ENCODE measurements at regions of chr5 and their contacts with region 1.

Region 1: GRCh38 chr5:61598126-61598525 is 266.1 kb downstream of the ZSWIM6 start:
- DNase-seq: no peak
- CTCF ChIP-seq: no peak

Region 2: DNA sequence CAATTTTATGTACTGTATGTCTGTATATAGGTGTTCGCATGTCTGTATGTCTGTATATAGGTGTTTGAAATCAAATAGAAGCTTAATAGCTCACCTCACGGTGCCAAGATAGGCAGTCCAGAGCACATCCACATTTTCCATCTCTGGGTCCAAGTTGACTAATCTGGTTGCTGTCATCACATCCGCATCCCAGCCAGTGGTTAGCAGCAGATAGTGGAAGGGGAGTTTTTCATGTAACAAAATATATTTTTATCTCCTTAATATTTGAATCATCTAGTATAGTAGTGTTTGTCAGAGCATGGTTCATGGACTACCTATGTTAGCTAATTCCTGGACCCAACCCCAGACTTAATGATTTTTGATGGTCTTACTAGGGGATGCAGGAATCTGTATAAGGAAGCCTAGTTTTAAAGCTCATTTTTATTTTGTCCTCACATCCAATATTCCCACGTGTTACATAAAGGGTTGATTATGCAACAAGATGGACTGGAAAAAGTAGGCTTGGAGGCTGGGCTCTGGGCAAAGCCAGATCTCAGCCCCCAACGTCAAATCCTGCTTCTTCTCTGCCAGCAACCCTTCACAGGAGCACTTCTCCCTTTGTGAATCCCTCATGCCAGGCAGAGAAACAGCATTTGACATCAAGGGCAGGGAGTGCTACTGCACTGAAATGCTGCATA is 46.4 kb before region 1 on chr5:
- CTCF ChIA-PET with region 1: no interaction called
- POLR2A ChIA-PET with region 1: no interaction called
- DNase-seq: no peak
- CTCF ChIP-seq: no peak

Region 3: GRCh38 chr5:61586096-61587084 is 11.7 kb before region 1 on chr5:
- CTCF ChIA-PET with region 1: interaction called, 11 read pairs
- POLR2A ChIA-PET with region 1: no interaction called
- DNase-seq: no peak
- CTCF ChIP-seq: no peak

Region 4: DNA sequence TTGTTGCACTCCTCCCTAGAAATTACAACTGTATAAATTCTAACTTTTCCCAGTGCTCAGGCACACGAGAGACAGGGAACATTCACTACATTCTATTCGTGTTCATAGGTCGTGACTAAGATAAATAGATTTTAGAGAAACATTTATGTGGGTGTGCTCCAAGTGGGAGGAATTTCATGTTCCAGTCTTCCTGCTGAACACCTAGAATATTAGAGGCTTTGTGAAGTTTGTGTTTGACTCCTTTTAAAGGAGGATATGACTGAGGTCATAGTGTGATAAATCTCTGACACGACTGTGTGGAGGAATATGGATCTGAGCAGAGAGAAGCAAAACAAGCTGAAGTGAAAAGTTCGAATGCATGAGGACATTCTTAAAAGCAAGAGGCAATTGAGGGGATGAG is 89.2 kb after region 1 on chr5:
- CTCF ChIA-PET with region 1: no interaction called
- POLR2A ChIA-PET with region 1: no interaction called
- DNase-seq: no peak
- CTCF ChIP-seq: no peak

Measured in GM10248 (cell line).